H1 (cell line): ENCODE measurements at regions of chr5 and their contacts with region 1.

Region 1: DNA sequence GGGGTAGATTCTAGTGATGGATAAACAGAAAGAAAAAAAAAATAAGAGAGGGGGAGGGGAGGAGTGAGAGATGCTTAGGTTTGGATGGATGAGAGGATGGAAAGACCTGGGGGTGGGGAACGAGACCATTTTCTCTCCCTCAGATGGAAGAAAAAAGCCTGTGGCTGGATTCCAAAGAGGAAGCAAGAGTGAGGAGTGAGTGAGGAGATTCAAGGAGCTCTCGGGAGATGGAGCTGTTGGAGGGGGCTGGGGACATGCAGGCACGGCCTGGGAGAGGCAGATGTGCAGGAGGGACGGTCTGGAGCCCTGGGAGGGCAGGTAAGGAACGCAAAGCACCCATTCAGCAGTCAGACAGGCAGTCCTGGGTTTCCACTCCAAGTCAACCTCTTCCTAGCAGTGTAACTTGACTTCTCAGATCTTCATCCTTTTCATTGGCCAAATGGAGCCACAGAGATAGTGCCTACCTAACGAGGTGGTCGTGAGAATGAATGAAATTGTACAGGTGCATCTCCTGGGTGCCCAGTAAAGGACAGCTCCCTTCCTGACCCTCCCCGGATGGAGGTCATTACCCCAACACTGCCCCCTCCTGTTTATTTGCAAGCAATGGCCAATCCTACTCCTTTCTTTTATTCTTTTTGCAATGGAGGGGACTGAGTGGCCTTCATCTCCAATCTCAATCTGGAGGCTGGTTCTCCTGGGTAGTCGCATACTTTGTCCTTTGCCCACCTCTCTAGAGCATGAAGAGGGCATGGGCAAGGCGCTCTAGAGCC is 52.2 kb downstream of the PCDH1 start:
- DNase-seq: no peak
- H3K4me3 ChIP-seq: no peak overlapping the region
- H3K27ac ChIP-seq: no peak overlapping the region
- H3K4me1 ChIP-seq: peaks cover 10 to 26% (median 16%) of the 10 kb centered on the region in 4 experiments
- H3K27me3 ChIP-seq: no peaks in the 10 kb centered on the region
- CTCF ChIP-seq: peak; percentile 56 to 70 (median 65)
- EP300 ChIP-seq: no peak
- POLR2A ChIP-seq: no peak
- RAD21 ChIP-seq: peak; percentile 64 to 74

Region 2: GRCh38 chr5:141603923-141604717 is 221.9 kb before region 1 on chr5:
- CTCF ChIA-PET with region 1: no interaction called
- POLR2A ChIA-PET with region 1: no interaction called
- DNase-seq: no peak
- H3K4me3 ChIP-seq: no peak overlapping the region
- H3K27ac ChIP-seq: no peak overlapping the region
- H3K4me1 ChIP-seq: no peaks in the 10 kb centered on the region; a peak in 1 of 7 replicates
- H3K27me3 ChIP-seq: no peaks in the 10 kb centered on the region
- CTCF ChIP-seq: no peak
- EP300 ChIP-seq: no peak
- POLR2A ChIP-seq: no peak
- RAD21 ChIP-seq: no peak

Region 3: DNA sequence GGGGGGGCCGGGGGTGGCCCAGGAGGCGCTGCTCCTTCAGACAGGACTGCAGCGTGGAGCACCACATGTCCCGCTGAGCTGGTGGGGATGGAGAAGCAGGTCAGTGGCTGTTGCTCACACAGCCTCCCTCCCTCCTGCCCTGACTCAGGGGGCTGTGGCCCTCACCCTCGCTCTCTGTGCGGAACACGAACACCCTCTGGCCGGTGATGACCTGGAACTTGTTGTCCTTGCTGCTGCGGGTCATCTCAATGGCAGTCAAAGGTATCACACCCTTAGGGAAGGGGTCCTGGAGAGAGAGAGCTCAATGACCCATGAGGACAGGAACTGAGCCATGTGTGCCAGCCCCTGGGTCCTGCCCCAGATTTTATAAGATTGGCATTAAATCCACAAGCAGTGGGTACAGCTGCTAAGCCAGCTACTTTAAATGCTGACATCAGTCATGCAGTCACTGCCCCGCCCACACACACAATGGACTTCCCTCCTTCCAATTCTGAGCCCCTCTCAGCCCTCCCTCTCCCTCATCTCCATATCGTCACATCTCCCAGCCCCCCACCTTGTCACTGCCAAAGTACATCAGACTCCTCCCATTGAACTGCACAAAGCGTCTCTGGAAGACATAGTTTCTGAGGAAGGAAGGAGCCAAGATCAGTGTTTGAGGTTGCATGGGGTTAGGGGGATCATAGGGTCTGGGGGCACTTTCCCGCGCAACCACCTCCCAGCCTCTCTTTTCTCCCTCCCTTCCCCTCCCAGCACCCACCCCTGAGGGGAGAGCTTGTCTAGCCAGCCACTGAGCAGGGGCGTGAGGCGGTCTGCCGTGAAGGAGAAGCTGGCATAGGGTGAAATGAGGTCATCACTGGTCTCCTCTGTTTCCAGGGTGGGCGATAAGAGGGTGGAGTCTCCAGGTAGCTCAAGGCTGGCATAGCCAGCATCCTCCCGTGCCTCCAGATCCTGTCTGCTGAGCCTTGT is 152.8 kb before region 1 on chr5:
- CTCF ChIA-PET with region 1: interaction called, 13 read pairs
- POLR2A ChIA-PET with region 1: no interaction called
- DNase-seq: no peak
- H3K4me3 ChIP-seq: no peak overlapping the region
- H3K27ac ChIP-seq: no peak overlapping the region; the same call in 1 of the 2 replicates
- H3K4me1 ChIP-seq: peaks cover 2 to 13% (median 8%) of the 10 kb centered on the region in 4 experiments; a peak in 5 of 7 replicates
- H3K27me3 ChIP-seq: no peaks in the 10 kb centered on the region
- CTCF ChIP-seq: no peak
- EP300 ChIP-seq: no peak
- POLR2A ChIP-seq: no peak
- RAD21 ChIP-seq: no peak

Region 4: GRCh38 chr5:141713616-141714309 is 112.2 kb before region 1 on chr5:
- CTCF ChIA-PET with region 1: interaction called, 12 read pairs
- POLR2A ChIA-PET with region 1: no interaction called
- DNase-seq: no peak
- H3K4me3 ChIP-seq: no peak overlapping the region
- H3K27ac ChIP-seq: no peak overlapping the region
- H3K4me1 ChIP-seq: peaks cover 3 to 20% (median 11%) of the 10 kb centered on the region in 4 experiments
- H3K27me3 ChIP-seq: no peaks in the 10 kb centered on the region
- CTCF ChIP-seq: no peak
- EP300 ChIP-seq: no peak
- POLR2A ChIP-seq: no peak
- RAD21 ChIP-seq: no peak

Region 5: GRCh38 chr5:141762790-141763368 is 63.1 kb before region 1 on chr5:
- CTCF ChIA-PET with region 1: interaction called, 179 read pairs
- POLR2A ChIA-PET with region 1: interaction called, 3 read pairs
- DNase-seq: no peak
- H3K4me3 ChIP-seq: no peak overlapping the region
- H3K27ac ChIP-seq: no peak overlapping the region
- H3K4me1 ChIP-seq: peaks cover 10 to 24% (median 21%) of the 10 kb centered on the region in 4 experiments
- H3K27me3 ChIP-seq: no peaks in the 10 kb centered on the region; a peak in 1 of 7 replicates
- CTCF ChIP-seq: peak in 1 of 3 experiments; percentile 18; a peak in 1 of 4 replicates
- EP300 ChIP-seq: no peak
- POLR2A ChIP-seq: no peak
- RAD21 ChIP-seq: peak; percentile 37 to 58; a peak in 3 of 4 replicates

Region 6: DNA sequence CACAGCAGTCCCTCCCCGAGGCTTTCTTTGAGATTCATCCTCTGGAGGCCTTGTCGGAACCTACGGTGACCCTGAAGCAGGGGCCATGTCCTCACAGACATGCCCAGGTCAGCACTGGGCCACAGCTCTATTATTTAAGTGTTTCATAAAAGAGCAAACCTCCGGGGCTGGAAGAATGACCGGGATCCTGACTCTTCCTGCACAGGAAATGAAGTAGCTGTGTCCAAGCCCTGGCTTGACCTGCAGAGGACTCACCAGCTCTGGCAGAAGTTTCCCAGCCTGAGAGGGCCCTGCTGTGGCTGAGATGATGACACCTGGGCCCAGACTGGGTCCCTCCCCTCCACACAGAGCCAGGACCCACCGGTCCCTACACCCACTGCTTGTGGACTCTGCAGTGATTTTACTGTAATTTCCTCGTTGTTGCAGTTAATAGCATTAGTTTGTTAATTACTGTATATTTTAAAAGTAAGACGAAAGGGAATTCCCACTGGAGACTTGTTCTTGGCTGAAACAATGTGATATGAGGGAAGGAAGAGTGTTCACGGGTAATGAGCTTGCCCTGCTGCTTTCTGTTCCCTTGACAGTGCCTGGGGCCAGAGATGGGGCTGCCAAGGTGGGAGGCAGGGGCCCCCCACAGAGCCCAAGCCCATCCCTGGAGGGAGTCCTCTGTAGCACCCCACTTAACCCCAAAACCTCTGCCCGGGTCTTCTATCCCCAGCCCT is 19.9 kb before region 1 on chr5:
- CTCF ChIA-PET with region 1: interaction called, 232 read pairs
- POLR2A ChIA-PET with region 1: interaction called, 16 read pairs
- DNase-seq: no peak
- H3K4me3 ChIP-seq: no peak overlapping the region
- H3K27ac ChIP-seq: no peak overlapping the region
- H3K4me1 ChIP-seq: peaks cover 11 to 39% (median 17%) of the 10 kb centered on the region in 4 experiments
- H3K27me3 ChIP-seq: no peaks in the 10 kb centered on the region; a peak in 1 of 7 replicates
- CTCF ChIP-seq: no peak
- EP300 ChIP-seq: no peak
- POLR2A ChIP-seq: no peak
- RAD21 ChIP-seq: no peak

Region 7: GRCh38 chr5:141855265-141856036 is 29.5 kb after region 1 on chr5:
- CTCF ChIA-PET with region 1: interaction called, 10 read pairs
- POLR2A ChIA-PET with region 1: interaction called, 5 read pairs
- DNase-seq: no peak
- H3K4me3 ChIP-seq: no peak overlapping the region
- H3K27ac ChIP-seq: 0 out of 2 replicates have a peak overlapping the region, but pooled peaks have one; percentile 10
- H3K4me1 ChIP-seq: peaks cover 20 to 48% (median 37%) of the 10 kb centered on the region in 4 experiments
- H3K27me3 ChIP-seq: no peaks in the 10 kb centered on the region
- CTCF ChIP-seq: no peak
- EP300 ChIP-seq: no peak
- POLR2A ChIP-seq: no peak
- RAD21 ChIP-seq: no peak

Region 8: GRCh38 chr5:141976176-141976575 is 150.2 kb after region 1 on chr5:
- CTCF ChIA-PET with region 1: no interaction called
- POLR2A ChIA-PET with region 1: no interaction called
- DNase-seq: no peak
- H3K4me3 ChIP-seq: no peak overlapping the region
- H3K27ac ChIP-seq: no peak overlapping the region
- H3K4me1 ChIP-seq: no peaks in the 10 kb centered on the region
- H3K27me3 ChIP-seq: no peaks in the 10 kb centered on the region
- CTCF ChIP-seq: no peak
- EP300 ChIP-seq: no peak
- POLR2A ChIP-seq: no peak
- RAD21 ChIP-seq: no peak